Activated CD8-positive, alpha-beta memory T cell treated with anti-CD3 and anti-CD28 coated beads, Interleukin-2, amount 10 ng/mL, durations not matched to agents 7 days and 5 days (primary cell): ENCODE measurements at regions of chr6 and their contacts with region 1.

Region 1: DNA sequence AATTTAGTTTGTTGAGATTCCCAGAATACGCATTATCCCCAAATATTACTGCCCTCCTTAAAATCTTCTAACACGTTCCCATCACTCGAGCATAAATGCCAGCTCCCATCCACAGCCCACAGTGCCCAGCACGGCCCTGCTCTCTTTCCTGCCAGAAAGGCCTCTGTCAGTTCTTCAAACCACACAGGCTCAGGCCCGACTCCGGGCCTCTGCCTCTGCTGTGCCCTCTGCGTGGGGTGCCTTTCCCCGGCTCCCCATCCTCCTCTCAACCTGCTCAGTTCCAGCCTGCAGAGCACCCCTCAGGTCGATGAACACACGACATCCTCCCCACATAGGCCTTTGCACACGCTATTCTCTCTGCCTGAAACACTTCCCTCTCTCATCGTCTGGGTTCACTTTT is 12.8 kb downstream of the ULBP3 start:
- DNase-seq: no peak
- ATAC-seq: no peak
- H3K4me3 Mint-ChIP-seq: no peak overlapping the region
- H3K27ac Mint-ChIP-seq: no peak overlapping the region
- H3K4me1 Mint-ChIP-seq: peaks cover 12% of the 10 kb centered on the region
- H3K27me3 Mint-ChIP-seq: peaks cover 52% of the 10 kb centered on the region

Region 2: GRCh38 chr6:150033207-150033771 is 22.9 kb before region 1 on chr6:
- CTCF ChIA-PET with region 1: no interaction called
- DNase-seq: no peak
- ATAC-seq: no peak
- H3K4me3 Mint-ChIP-seq: no peak overlapping the region
- H3K27ac Mint-ChIP-seq: no peak overlapping the region
- H3K4me1 Mint-ChIP-seq: peaks cover 7% of the 10 kb centered on the region
- H3K27me3 Mint-ChIP-seq: peaks cover 71% of the 10 kb centered on the region

Region 3: DNA sequence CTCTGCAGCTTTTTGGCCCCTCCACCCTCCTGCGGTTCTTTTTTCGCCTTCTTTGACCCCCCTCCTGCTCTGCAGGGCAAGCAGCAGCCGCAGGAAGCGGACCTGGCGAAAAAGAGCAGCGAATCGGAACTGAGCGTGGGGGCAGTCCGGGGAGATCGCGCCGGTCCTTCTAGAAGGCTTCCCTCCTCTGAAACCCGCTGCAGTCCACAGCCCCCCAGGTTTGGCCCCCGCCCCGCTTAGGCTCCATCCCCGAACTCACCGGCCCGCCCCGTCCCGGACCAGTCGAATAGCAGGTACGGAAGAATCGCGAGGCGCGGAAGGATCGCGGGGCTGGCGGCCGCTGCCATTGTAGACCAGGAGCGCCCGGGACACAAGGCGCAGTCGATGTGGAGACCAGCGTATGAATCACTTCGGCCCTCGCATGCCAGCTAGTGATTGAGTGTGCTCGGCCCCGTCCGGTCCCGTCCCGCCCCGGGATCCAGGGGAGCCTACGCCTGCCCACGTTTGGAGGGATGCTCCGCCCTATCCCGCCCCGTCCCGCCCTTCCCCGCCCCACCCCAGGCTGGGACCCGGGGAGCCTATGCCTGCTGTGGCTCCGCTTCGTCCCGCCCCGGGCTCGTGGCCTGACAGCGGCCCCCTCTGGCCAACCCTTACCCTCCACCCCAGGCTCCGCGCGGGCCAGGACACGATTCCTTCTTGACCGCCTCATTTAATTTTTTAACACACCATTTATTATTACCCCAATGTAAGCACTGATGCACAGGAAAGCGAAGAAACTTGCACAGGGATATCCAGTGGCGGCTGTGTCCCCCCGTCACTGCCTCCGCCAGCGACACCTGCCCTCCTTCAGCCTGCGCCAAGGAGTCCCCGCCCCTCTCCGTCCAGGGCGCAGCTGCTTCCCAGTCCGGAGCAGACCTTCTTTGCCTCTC is 12.8 kb after region 1 on chr6 and contains the start of gene ULBP3:
- CTCF ChIA-PET with region 1: interaction called, 15 read pairs
- DNase-seq: peak; percentile 85
- ATAC-seq: peak; percentile 87
- H3K4me3 Mint-ChIP-seq: peak within 1 kb of the TSS; percentile 69
- H3K27ac Mint-ChIP-seq: peak within 1 kb of the TSS; percentile 26
- H3K4me1 Mint-ChIP-seq: peaks cover 31% of the 10 kb centered on the region
- H3K27me3 Mint-ChIP-seq: peaks cover 21% of the 10 kb centered on the region
- total RNA-seq, gene ULBP3: 1.4 to 2.1 TPM

Region 4: DNA sequence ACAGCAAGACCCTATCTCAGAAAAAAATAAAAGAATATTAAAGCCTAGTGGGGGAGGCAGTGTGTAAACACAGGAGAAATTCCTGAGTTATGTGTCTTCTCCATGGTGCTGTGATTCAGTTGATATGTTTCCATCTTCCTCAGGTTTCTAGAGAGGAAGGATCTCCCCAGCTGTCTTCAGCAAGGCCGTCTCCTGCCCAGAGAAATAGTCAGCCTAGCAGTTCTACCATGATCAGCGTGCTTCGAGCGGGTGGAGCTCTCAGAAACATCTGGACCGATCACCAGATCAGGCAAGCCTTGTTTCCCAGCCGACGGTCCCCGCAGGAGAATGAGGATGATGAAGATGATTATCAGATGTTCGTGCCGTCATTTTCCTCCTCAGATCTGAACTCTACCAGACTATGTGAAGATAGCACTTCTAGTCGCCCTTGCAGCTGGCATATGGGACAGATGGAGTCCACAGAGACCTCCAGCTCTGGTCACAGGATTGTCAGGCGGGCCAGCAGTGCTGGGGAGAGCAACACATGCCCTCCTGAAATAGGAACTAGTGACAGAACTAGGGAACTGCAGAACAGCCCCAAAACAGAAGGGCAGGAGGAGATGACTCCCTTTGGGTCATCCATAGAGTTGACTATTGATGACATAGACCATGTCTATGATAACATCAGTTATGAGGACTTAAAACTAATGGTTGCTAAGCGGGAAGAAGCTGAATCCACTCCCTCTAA is 774.4 kb after region 1 on chr6:
- CTCF ChIA-PET with region 1: no interaction called
- DNase-seq: no peak
- ATAC-seq: no peak
- H3K4me3 Mint-ChIP-seq: no peak overlapping the region
- H3K27ac Mint-ChIP-seq: no peak overlapping the region
- H3K4me1 Mint-ChIP-seq: no peaks in the 10 kb centered on the region
- H3K27me3 Mint-ChIP-seq: no peaks in the 10 kb centered on the region